Activated CD8-positive, alpha-beta T cell treated with anti-CD3 and anti-CD28 coated beads for 36 hours (primary cell): ENCODE measurements at regions of chr2 and their contacts with region 1.

Region 1: DNA sequence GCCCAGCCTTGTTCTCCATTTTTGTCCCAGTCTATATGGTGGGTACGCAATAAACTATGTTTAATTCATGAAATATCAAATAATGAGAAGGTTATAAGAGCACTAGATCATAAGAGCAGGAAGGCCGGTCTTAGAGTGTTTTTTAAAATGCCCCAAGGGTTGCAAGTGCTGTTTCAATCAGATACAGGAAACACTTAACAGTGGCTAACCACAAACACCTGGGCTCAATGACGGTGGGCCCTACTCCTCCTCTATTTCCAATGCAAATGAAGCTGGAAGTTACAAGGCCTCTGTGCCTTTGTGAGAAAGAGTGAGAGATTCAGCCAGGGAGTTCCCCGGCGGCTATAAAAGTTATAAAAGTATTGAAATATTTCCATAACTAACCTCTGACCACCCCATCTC is 18.9 kb upstream of the WDR33 start:
- DNase-seq: peak; percentile 93
- ATAC-seq: peak; percentile 96
- H3K4me3 Mint-ChIP-seq: peak overlapping the region; percentile 22
- H3K27ac Mint-ChIP-seq: peak overlapping the region; percentile 89
- H3K4me1 Mint-ChIP-seq: peaks cover 27% of the 10 kb centered on the region
- H3K27me3 Mint-ChIP-seq: no peaks in the 10 kb centered on the region
- CTCF ChIP-seq: no peak

Region 2: GRCh38 chr2:127810619-127811396 is 19.0 kb before region 1 on chr2 and contains the start of gene WDR33:
- CTCF ChIA-PET with region 1: interaction called, 8 read pairs
- POLR2A ChIA-PET with region 1: interaction called, 12 read pairs
- intact Hi-C with region 1: no loop called
- DNase-seq: peak; percentile 96
- ATAC-seq: peak; percentile 97
- H3K4me3 Mint-ChIP-seq: peak within 1 kb of the TSS; percentile 85
- H3K27ac Mint-ChIP-seq: peak within 1 kb of the TSS; percentile 99
- H3K4me1 Mint-ChIP-seq: peaks cover 35% of the 10 kb centered on the region
- H3K27me3 Mint-ChIP-seq: peaks cover 3% of the 10 kb centered on the region
- CTCF ChIP-seq: no peak
- total RNA-seq, gene WDR33: 71.4 to 74.6 TPM

Region 3: GRCh38 chr2:127913808-127914457 is 84.1 kb after region 1 on chr2:
- CTCF ChIA-PET with region 1: no interaction called
- POLR2A ChIA-PET with region 1: no interaction called
- intact Hi-C with region 1: no loop called
- DNase-seq: no peak
- ATAC-seq: no peak
- H3K4me3 Mint-ChIP-seq: no peak overlapping the region
- H3K27ac Mint-ChIP-seq: no peak overlapping the region
- H3K4me1 Mint-ChIP-seq: no peaks in the 10 kb centered on the region
- H3K27me3 Mint-ChIP-seq: no peaks in the 10 kb centered on the region
- CTCF ChIP-seq: no peak